ENCODE measurements at regions of chr20 and their contacts with region 1.

Region 1: DNA sequence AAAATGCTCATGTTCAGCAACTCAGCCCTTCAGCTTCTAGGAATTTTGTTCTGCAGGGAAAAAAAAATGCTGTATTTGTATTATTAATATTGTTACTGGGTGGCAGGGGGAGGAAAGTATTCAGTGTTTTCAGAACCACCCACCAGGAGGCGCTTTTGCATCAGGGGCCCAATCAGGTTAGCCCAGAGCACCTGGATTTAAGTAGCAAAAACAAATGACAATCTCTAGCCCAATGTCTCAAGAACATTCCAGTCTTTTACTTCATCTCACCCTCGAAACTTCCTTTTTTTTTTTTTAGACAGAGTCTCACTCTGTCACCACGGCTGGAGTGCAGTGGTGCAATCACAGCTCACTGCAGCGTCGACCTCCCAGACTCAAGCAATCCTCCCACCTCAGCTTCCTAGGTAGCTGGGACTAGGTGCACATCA is 635 bp upstream of the C20orf203 start:
- DNase-seq: peak; percentile 79 to 91
- H3K4me3 ChIP-seq: no peak overlapping the region
- H3K4me3 Mint-ChIP-seq: no peak overlapping the region
- H3K27ac Mint-ChIP-seq: peak overlapping the region; percentile 74
- H3K4me1 ChIP-seq: peaks cover 13% of the 10 kb centered on the region; the same call in 1 of the 2 replicates
- H3K4me1 Mint-ChIP-seq: peaks cover 23% of the 10 kb centered on the region
- H3K27me3 ChIP-seq: no peaks in the 10 kb centered on the region
- H3K27me3 Mint-ChIP-seq: no peaks in the 10 kb centered on the region
- CTCF ChIP-seq: peak; percentile 97 to 99

Region 2: DNA sequence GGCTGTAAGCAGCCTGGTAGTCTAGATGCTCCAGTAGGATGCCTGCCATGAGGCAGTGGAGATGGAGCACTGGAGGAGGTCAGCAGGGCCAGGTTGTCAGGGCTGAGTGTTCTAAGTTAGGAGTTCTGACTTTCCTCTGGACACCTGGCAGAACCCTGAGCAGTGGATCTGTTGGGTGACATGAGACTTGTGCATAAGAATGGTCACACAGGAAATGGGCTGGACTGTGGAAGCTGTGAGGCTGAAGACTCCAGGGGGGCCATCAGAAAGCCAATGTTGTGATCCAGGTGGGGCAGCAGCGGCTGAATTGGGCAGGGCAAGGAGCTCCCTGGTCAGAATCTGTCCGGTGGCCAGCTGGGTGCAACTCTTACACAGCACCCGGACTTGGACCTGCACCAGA is 23.2 kb after region 1 on chr20:
- CTCF ChIA-PET with region 1: interaction called, 15 read pairs
- POLR2A ChIA-PET with region 1: no interaction called
- intact Hi-C with region 1: loop called (anchors 2 kb)
- DNase-seq: no peak
- H3K4me3 ChIP-seq: no peak overlapping the region
- H3K4me3 Mint-ChIP-seq: no peak overlapping the region
- H3K27ac Mint-ChIP-seq: peak overlapping the region; percentile 43
- H3K4me1 ChIP-seq: peaks cover 19% of the 10 kb centered on the region
- H3K4me1 Mint-ChIP-seq: peaks cover 31% of the 10 kb centered on the region
- H3K27me3 ChIP-seq: no peaks in the 10 kb centered on the region
- H3K27me3 Mint-ChIP-seq: no peaks in the 10 kb centered on the region
- CTCF ChIP-seq: no peak

Region 3: DNA sequence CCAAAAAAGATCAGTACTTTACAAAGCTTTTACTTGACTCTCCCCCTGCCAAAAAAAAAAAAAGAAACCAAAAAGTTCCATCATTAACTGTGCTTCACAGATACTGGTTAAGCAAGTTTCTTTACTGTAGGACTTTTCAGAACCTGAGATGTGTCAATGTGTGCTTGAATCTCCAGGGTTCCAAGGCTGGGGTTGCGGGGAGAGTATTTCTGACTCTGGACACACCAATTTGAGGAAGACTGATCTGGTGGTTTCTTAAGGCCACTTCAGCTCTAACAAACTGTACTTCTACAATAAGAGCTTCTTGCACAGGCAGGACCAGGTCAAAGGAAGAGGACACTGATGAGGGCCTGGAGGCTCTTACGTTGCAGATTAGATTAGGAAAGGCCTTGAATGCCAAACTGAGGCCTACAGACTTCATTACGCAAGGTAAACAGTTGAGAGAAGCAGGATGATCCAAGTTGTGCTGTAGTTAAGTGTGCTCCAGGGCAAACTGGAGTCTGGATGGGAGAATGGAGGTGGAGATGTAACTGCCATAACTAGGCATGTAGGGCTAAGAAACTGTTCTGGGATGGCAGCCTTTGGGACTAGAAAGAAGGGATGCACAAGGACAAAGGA is 44.5 kb after region 1 on chr20:
- CTCF ChIA-PET with region 1: no interaction called
- POLR2A ChIA-PET with region 1: no interaction called
- intact Hi-C with region 1: loop called (anchors 2 kb)
- DNase-seq: peak; percentile 70
- H3K4me3 ChIP-seq: no peak overlapping the region
- H3K4me3 Mint-ChIP-seq: peak overlapping the region; percentile 3
- H3K27ac Mint-ChIP-seq: peak overlapping the region; percentile 65
- H3K4me1 ChIP-seq: peaks cover 23% of the 10 kb centered on the region
- H3K4me1 Mint-ChIP-seq: peaks cover 10% of the 10 kb centered on the region
- H3K27me3 ChIP-seq: no peaks in the 10 kb centered on the region
- H3K27me3 Mint-ChIP-seq: no peaks in the 10 kb centered on the region
- CTCF ChIP-seq: no peak

Region 4: GRCh38 chr20:32743237-32744112 is 69.1 kb after region 1 on chr20 and contains the start of gene COMMD7:
- CTCF ChIA-PET with region 1: interaction called, 11 read pairs
- POLR2A ChIA-PET with region 1: no interaction called
- intact Hi-C with region 1: loop called (anchors 1 kb)
- DNase-seq: peak; percentile 89 to 90
- H3K4me3 ChIP-seq: peak within 1 kb of the TSS; percentile 88
- H3K4me3 Mint-ChIP-seq: peak within 1 kb of the TSS; percentile 89
- H3K27ac Mint-ChIP-seq: peak within 1 kb of the TSS; percentile 87
- H3K4me1 ChIP-seq: peaks cover 39% of the 10 kb centered on the region
- H3K4me1 Mint-ChIP-seq: peaks cover 20% of the 10 kb centered on the region
- H3K27me3 ChIP-seq: no peaks in the 10 kb centered on the region
- H3K27me3 Mint-ChIP-seq: no peaks in the 10 kb centered on the region
- CTCF ChIP-seq: no peak
- total RNA-seq, gene COMMD7: 142 and 160 TPM in 2 replicates

Region 5: GRCh38 chr20:32762149-32762753 is 87.9 kb after region 1 on chr20 and contains the start of gene DNMT3B:
- CTCF ChIA-PET with region 1: interaction called, 6 read pairs
- POLR2A ChIA-PET with region 1: no interaction called
- intact Hi-C with region 1: loop called (anchors 1 kb)
- DNase-seq: peak; percentile 97 to 99
- H3K4me3 ChIP-seq: peak within 1 kb of the TSS; percentile 87
- H3K4me3 Mint-ChIP-seq: peak within 1 kb of the TSS; percentile 100
- H3K27ac Mint-ChIP-seq: peak within 1 kb of the TSS; percentile 93
- H3K4me1 ChIP-seq: peaks cover 25% of the 10 kb centered on the region
- H3K4me1 Mint-ChIP-seq: peaks cover 33% of the 10 kb centered on the region
- H3K27me3 ChIP-seq: no peaks in the 10 kb centered on the region
- H3K27me3 Mint-ChIP-seq: no peaks in the 10 kb centered on the region
- CTCF ChIP-seq: peak in 1 of 2 experiments; percentile 31
- total RNA-seq, gene DNMT3B: 95.5 and 105 TPM in 2 replicates

Region 6: DNA sequence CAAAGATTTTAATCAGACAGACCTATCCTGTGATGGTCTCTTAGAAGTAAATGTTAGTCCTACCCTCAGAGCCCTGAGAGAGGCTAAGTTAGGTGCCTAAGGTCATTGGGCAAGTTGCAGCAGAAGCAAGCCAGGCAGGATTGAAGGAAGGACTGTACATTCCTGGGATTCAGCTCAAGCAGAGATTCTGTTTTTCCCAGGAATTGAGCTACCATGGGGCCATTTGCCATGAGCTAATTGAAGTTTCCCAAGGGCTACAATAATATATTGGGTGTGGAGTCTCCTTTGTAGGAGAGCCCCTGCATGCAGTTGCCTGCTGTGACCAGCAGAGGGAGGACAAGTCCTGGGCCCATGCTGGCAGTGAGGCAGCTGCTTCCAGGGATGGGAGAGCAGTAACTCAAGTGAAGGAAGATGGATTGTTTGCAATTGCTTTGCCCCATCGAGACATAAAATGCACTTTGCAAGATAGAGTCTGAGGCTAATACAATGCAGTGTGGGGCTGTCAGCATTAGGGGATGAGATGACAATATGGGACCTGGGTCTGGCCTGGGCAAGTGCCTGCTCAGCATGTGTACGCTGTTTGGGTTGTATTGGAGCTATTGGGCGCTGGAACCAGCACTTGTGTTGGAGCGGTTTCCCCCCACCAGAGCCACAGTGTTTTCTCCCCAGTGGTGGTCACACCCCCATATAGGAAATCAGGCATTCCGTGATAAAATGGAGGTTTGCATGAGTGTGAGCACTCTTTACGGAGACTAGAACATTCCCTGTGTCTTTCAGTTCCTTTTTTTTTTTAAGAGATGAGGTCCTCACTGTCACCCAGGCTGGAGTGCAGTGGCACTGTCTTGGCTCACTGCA is 115.7 kb after region 1 on chr20:
- CTCF ChIA-PET with region 1: interaction called, 12 read pairs
- POLR2A ChIA-PET with region 1: no interaction called
- intact Hi-C with region 1: loop called (anchors 1 kb)
- DNase-seq: peak; percentile 88 to 91
- H3K4me3 ChIP-seq: no peak overlapping the region
- H3K4me3 Mint-ChIP-seq: no peak overlapping the region
- H3K27ac Mint-ChIP-seq: no peak overlapping the region
- H3K4me1 ChIP-seq: peaks cover 13% of the 10 kb centered on the region; the same call in 1 of the 2 replicates
- H3K4me1 Mint-ChIP-seq: no peaks in the 10 kb centered on the region
- H3K27me3 ChIP-seq: no peaks in the 10 kb centered on the region
- H3K27me3 Mint-ChIP-seq: no peaks in the 10 kb centered on the region
- CTCF ChIP-seq: peak; percentile 100

Region 7: GRCh38 chr20:32945710-32946221 is 271.4 kb after region 1 on chr20:
- CTCF ChIA-PET with region 1: no interaction called
- POLR2A ChIA-PET with region 1: no interaction called
- intact Hi-C with region 1: loop called (anchors 1 kb)
- DNase-seq: peak in 1 of 2 experiments; percentile 68
- H3K4me3 ChIP-seq: no peak overlapping the region
- H3K4me3 Mint-ChIP-seq: no peak overlapping the region
- H3K27ac Mint-ChIP-seq: no peak overlapping the region
- H3K4me1 ChIP-seq: no peaks in the 10 kb centered on the region
- H3K4me1 Mint-ChIP-seq: no peaks in the 10 kb centered on the region
- H3K27me3 ChIP-seq: no peaks in the 10 kb centered on the region; the same call in 1 of the 2 replicates
- H3K27me3 Mint-ChIP-seq: peaks cover 33% of the 10 kb centered on the region
- CTCF ChIP-seq: peak; percentile 91 to 92

Measured in Caco-2 (cell line).